AG04449 (cell line): ENCODE measurements at regions of chr5 and their contacts with region 1.

Region 1: DNA sequence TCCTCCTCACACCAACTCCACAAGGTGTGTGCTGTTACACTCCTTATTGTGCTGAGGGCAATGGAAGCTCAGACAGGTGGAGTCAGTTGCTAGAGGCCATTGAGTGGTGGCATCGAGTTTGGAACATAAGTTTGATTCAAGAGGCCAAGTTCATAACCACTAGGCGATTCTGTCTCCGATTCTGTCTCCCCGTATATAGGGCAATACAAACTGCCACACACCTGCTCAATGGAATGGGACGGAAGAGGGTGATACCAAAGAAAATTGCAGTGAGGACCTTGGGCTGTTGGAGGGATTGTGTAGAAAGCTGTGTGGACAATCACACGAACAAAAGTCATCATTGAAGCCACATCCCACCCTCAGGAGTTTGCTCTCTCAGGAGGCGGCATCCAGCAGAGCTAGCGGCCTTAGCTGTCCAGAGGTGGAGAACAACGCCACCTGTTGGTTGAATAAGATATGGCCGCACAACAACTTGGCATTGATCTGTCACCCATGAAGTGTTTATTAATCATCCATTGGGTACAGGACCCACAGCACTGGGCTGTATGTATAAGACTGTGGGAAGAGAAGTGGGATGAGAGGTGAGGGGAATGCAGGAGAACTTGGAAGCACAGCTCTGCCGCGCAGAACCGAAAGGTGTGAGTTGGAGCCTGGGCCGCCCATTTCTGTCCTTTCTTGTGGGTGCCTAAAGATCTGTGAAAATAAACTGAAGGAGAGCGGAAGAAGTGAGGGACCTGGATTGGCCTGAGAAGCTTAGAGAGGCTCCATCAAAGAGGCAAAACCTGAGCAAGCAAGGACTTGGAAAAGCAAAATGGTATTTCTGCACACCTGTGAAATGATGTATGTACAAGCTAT is 16.1 kb upstream of the NEUROG1 start:
- DNase-seq: no peak
- H3K4me3 ChIP-seq: no peak overlapping the region
- CTCF ChIP-seq: peak; percentile 81

Region 2: DNA sequence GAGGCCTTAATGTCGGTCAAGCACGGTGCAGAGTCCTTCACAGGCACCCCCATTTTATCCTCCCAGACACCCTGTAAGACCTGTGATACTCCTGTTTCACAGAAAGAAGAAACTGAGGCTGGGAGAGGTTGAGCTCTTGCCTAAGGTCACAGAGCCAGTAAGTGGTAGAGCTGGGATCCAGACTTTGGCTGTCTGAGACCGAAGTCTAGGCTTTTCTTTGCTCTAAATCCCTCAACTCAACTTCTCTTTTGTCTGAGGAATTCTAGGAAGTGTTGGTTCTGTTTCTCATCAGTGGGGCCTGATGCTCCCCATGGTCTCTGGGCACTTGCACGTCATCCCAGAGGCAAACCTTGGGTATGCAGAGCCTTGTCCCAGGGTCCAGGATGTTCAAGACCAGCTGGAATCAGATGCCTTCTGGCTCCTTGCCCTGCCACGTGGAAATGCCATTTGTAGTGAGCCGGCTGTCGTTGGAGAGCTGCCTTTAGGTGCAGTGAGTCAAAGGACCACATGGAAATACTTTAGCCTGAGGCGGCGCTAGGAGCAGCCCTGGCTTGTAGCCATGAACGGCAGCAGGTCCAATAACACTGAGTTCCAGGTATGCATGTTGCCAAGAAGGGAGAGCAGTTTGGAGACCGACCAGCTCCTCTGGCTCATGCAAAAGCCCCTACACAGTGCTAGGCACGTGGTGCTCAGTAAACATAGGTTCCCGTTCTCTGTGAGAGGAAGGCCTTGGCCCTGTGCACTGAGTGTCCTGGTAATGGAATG is 113.8 kb before region 1 on chr5:
- CTCF ChIA-PET with region 1: interaction called, 12 read pairs
- POLR2A ChIA-PET with region 1: no interaction called
- DNase-seq: peak; percentile 68
- H3K4me3 ChIP-seq: no peak overlapping the region
- CTCF ChIP-seq: no peak

Region 3: DNA sequence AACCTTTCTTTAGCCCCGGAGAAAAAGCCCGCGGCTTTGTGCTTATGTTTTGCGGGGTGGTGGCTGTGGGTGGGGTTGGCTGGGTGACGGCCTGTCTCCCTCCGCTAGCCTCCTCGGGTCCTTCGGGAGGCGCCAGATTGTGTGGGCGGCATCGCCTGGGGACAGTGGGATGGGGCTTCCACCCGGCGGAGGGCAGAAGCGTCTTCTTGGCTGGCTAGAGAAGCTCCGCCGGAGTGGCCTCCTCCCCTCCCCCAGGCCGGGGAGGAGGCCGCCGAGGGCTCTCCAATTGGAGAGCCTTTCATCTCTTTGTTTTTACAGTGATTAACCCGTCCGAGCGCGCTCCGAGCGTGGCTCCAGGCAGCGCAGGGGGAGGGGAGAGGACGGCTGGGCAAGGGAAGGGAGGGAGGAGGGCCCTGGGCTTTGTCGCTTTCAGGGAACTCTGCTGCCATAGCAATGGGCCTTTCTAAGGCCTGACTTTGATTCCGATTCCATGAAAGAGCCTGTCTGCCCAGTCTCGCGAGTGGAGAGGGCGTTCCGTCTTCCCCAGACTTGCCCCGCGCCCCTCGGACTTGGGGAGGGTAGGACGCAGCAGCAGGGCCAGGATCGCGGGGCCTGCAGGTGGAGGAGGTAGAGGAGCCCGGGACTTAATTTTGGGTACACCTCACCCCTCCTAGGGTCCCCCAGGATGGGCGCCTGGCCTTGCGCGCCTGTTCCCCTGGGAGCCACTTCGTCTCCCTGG is 62.9 kb before region 1 on chr5:
- CTCF ChIA-PET with region 1: interaction called, 85 read pairs
- POLR2A ChIA-PET with region 1: no interaction called
- DNase-seq: no peak
- H3K4me3 ChIP-seq: peak overlapping the region; percentile 56
- CTCF ChIP-seq: no peak

Region 4: DNA sequence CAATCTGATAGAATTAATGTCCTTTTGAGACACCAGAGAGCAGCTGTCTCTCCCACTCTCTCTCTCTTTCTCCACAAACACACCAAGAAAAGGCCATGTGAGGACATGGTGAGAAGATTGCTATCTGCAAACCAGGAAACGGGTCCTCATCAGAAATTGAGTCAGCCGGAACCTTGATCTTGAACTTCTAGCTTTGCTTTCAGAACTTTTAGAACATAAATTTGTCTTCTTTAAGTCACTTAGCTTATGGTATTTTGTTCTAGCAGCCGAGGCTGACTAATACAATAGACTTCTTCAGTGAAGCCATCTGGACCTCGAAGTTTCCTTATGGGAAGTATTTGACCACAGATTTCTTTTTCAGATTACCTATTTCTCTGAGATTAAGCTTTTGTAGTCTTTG is 34.2 kb before region 1 on chr5:
- CTCF ChIA-PET with region 1: interaction called, 25 read pairs
- POLR2A ChIA-PET with region 1: no interaction called
- DNase-seq: no peak
- H3K4me3 ChIP-seq: no peak overlapping the region
- CTCF ChIP-seq: no peak

Region 5: GRCh38 chr5:135535820-135536801 is 15.7 kb before region 1 on chr5 and contains the start of gene NEUROG1:
- CTCF ChIA-PET with region 1: interaction called, 39 read pairs
- POLR2A ChIA-PET with region 1: no interaction called
- DNase-seq: no peak
- H3K4me3 ChIP-seq: no peak within 1 kb of the TSS
- CTCF ChIP-seq: no peak

Region 6: DNA sequence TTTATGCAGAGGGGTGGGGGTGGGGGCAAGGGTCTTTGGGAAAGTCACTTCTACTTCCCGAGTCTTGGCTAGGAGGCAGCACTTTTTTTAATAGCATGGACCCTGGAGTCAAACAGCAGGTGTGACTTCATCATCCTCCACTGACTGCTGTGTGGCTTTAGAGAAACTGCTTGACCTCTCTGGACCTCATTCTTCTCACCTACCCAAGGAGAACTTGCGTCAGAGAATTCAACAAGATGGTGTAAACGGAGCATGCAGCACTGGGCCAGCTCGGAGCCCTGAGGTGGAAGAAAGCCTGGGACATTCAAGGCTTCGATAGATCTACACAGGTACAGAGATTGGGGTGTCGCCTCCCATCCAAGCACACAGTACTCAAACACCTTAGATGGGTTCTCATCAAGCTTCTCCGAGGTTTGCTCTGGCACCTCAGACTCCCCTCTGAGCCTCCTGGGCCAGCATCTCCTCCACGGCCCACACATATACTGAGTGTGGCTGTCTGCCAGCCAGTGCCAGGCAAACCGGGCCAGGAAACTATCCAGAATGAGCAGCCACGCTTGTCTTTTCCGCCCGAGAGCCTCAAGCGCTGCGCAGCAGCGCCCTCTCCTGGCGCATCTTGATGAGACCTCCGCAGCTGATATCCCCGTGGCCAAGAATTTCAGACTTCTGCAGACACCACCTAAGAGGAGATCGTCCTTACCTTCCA is 278.0 kb after region 1 on chr5:
- CTCF ChIA-PET with region 1: interaction called, 404 read pairs
- POLR2A ChIA-PET with region 1: no interaction called
- DNase-seq: no peak
- H3K4me3 ChIP-seq: no peak overlapping the region
- CTCF ChIP-seq: peak; percentile 72